ENCODE measurements at regions of chr20 and their contacts with region 1.

Region 1: DNA sequence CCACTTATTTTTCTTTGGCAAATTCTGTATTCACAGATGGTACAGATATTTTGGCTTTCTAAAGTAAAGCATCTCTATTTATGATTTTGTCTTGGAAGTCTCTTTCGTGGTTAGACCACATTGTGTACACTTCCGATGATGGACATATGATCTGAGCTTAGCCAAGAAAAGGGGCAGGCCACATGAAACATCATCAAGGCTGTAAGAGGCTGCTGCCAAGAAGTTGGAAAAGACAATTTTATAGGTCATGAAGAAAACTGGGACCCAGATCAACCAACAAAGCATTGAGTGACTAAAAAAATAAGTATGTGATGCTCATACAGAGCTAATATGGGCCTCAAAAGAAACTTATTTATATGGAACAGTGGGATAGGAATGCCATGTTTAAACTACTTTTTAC is 266.4 kb downstream of the HAO1 start:
- DNase-seq: peak; percentile 97
- ATAC-seq: peak; percentile 99
- H3K4me3 ChIP-seq: no peak overlapping the region
- H3K27ac ChIP-seq: peak overlapping the region; percentile 9; the same call in 1 of the 2 replicates
- H3K4me1 ChIP-seq: peaks cover 14% of the 10 kb centered on the region
- H3K27me3 ChIP-seq: no peaks in the 10 kb centered on the region
- CTCF ChIP-seq: no peak

Region 2: GRCh38 chr20:7585126-7585679 is 88.6 kb before region 1 on chr20:
- CTCF ChIA-PET with region 1: no interaction called
- POLR2A ChIA-PET with region 1: no interaction called
- intact Hi-C with region 1: no loop called
- DNase-seq: no peak
- ATAC-seq: no peak
- H3K4me3 ChIP-seq: no peak overlapping the region
- H3K27ac ChIP-seq: no peak overlapping the region
- H3K4me1 ChIP-seq: no peaks in the 10 kb centered on the region
- H3K27me3 ChIP-seq: no peaks in the 10 kb centered on the region
- CTCF ChIP-seq: no peak

Region 3: DNA sequence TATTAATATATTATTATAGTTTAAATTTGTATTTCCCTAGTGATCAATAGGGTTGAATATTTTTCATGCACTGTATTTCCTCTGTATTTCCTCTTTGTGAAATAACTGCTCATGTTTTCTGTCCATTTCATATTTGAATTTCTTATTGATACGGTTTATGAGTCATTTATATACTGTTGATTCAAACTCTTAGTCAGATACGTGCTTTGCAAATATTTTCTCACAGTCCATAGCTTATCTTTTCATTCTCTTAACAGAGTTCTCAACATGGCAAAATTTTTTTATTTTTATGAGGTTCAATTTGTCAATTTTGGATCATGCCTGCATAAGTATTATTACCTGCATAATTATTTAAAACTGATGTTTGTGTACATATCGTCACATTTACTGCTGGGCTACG is 63.2 kb before region 1 on chr20:
- CTCF ChIA-PET with region 1: no interaction called
- POLR2A ChIA-PET with region 1: no interaction called
- intact Hi-C with region 1: loop called (anchors 2 kb)
- DNase-seq: peak; percentile 75
- ATAC-seq: peak; percentile 89
- H3K4me3 ChIP-seq: peak overlapping the region; percentile 14; the same call in 1 of the 2 replicates
- H3K27ac ChIP-seq: peak overlapping the region; percentile 4; the same call in 1 of the 2 replicates
- H3K4me1 ChIP-seq: peaks cover 12% of the 10 kb centered on the region
- H3K27me3 ChIP-seq: no peaks in the 10 kb centered on the region
- CTCF ChIP-seq: no peak

Measured in PC-3 (cell line).